ENCODE measurements at regions of chr15 and their contacts with region 1.

Region 1: GRCh38 chr15:74857712-74858368 is 14.9 kb upstream of the ULK3 start:
- DNase-seq: no peak

Region 2: DNA sequence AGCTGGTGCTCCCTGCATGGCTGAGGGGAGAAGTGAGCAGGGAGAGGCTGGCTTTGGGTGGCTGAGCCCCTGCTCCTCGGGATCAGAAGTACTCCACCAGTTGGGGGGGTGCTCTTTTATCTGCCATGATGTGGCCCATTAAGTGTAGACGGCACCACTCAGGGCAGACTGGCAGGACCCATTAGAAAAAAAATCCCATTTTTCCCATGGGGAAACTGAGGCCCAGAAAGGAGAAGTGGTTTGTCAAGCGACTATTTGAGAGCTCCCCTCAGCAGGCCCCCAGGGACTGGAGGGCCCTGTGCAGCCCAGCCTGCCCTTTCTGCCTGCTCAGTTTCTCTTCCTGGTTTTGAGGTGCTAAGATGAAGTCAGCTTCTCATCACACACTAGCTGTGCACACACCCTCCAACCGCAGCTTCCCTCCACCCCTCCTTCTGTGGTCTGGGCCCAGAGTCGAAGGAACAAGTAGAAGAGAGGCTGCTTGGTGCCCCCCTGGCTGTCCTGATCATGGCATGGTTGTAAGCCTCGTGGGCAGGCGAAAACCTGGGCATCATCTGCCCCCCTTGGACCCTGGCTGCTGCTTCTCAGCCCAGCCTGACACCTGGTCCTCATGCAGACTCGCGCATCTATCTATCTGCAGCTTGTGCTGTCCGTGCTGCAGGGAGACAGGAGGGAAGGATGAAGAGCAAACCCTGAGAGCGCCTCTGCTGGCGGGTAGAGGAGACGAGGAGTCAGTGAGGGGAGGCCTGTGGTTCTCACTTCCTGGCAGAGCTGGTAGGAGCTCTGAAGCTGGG is 70.4 kb before region 1 on chr15:
- intact Hi-C with region 1: no loop called
- DNase-seq: peak; percentile 92

Region 3: DNA sequence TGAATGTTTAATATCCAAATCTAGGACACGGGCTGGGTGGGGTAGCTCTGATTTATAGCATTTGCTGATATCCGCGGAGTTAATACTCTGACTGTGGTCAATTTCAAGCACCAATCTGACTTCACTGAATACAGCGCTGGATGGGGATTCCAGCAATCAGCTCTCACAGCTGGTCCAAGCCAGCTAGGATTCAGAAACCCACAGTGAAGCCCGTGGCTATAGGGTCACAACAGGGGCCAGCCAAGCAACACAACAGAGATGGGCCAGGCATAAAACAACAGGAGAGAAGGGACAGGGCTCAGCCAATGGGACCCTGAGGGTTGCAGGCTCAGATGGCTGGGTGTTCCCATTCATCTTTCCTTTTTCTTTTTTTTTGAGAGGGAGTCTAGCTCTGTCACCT is 50.6 kb before region 1 on chr15:
- intact Hi-C with region 1: loop called in 1 of 2 experiments (anchors 2 kb)
- DNase-seq: no peak

Region 4: DNA sequence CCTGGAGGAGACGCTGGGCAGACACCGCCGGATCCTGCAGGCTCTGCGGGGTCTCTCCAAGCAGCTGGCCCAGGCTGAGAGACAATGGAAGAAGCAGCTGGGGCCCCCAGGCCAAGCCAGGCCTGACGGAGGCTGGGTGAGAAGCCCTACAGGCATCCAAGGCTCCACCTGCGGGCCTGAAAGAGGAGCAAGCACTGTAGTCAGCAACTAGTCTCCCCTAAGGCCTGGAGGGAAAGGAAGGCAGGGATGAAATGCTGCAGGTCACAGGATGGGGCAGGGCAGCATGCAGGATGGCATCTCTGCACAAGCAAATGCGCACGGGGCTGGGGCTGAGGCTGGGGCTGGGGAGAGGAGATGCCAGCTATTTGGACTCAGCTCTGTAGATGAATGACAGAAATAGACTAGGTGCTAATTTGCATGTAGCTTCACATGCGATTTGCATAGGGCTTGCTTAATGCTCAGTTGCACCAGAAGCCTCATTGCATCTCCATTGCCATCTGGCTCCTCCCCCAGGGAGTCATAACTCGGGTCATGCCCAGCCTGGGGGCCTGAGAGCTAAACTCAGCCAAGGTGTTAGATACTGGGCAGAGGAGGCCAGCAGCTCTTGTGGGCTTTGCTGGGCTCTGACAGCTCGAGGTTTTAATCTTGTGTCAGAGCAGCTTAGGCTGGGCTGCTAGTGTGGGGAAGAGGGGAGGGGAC is 36.6 kb before region 1 on chr15:
- intact Hi-C with region 1: no loop called
- DNase-seq: no peak